Left colon (tissue), 2 donors: ENCODE measurements at regions of chr12 and their contacts with region 1.

Region 1: DNA sequence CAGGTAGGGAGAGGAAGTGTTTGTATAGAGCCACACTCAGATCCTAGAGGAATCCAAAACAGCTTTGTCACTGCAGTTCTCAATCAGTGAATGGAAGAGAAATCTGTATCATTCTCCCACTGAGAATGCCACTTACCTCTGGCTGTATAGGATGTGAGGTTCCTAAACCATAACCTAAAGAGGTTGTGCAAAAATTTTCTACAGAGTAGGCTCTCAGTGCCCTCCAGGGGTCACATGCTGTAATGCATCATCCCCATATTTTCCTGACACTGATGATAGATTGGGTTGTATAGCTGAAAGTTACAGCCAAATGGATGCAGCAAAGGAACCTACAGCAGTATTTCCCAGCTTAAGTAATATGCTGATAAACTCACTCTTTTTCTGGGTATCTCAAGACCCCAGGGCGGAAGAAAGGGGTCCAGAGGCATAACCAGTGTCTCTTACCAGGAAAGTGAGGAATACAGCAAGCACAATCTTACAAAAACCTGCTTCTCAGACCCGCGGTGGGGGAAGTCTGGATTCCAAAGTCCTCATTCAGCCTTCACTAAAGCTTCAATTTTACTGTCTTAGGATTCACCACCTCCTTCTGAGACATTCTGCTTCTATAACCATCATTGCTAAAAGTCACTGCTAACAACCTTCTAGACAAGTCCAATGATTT is 3.8 kb downstream of the BCDIN3D start:
- DNase-seq: peak in 1 of 2 donors; percentile 23
- ATAC-seq: no peak

Region 2: GRCh38 chr12:49439042-49439441 is 400.1 kb before region 1 on chr12:
- intact Hi-C with region 1: no loop called
- DNase-seq: no peak
- ATAC-seq: peak; percentile 17

Region 3: DNA sequence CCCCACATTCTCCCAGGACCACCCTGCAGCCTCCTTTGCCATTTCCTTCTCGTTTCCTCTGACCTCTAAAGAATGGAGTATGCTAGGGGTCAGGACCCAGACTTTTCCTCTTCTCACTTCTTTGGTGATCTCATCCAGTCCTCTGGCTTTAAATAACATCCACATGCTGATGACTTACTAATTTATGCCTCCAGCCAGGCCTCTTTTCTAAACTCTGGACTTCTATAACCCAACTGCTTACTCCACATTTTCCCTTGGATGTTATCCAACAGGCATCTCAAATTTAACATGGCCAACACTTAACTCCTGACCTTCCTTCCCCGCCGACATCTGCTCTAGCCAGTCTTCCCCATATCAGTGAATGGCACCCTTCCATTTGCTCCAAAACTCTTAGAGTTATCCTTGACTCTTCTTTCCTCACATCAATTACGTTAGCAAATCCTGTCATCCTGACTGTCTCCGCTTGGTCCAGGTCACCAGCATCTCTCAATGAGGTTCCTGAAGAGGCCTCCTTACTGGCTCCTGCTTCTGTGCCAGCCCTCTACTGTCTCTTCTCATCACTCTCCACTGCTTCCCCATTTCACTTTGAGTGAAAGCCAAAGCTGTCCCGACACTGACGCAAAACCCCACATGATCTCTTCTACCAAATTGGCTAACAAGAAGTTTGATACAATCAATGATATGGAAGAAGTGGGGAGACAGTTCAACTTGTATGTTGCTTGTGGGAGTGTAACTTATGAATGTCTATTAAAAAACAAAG is 55.0 kb before region 1 on chr12:
- intact Hi-C with region 1: loop called (anchors 10 kb)
- DNase-seq: no peak
- ATAC-seq: no peak

Region 4: GRCh38 chr12:49912345-49913255 is 73.5 kb after region 1 on chr12:
- intact Hi-C with region 1: no loop called
- DNase-seq: no peak
- ATAC-seq: no peak